ENCODE measurements at regions of chr2 and their contacts with region 1.

Region 1: DNA sequence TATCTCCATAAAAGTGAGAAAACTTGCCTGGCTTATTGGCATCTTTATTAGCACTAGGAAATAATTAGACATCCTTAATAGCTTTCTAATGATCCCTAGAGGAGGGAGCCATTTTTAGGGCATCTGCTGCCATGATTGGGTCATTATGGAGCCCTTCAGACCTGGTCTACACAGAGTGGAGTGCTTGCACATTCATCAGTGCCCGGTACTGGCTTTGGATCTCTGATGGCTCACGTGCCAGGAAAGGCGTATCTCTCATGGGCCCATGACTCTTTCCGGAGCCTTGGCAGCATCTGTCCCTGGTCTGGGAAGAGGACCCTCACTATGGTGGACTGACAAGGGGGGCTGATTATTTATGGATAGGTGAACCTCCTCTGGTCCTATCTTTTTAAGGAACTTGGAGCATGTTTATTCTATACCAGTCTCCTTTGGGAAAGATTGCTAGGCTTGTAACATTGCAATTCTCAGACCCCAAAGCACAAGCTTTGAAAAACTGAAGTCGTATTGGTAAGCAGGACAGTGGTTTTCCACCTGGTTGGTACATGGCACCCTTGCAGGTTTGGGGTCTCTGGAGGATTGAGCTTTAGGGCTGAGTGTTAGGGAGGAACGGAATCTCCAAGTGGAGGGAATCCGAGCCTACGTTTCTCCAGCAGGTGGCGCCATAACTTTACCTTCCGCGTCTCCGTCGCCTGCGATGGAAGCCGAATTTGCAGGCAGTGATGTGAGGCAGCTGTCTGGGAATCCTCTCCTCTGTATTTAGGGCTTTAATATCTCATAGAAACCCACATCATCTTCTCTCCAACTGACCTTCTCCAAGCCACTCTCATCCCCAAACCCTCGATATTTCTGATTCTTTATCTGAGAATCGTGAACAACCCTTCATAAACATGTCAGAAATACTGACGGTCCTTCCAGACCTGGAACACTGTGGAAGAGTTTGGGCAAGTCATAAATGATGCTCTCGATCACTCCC is 27.8 kb downstream of the SIX2 start:
- DNase-seq: peak; percentile 60
- ATAC-seq: peak; percentile 96
- H3K4me3 ChIP-seq: no peak overlapping the region
- H3K27ac ChIP-seq: no peak overlapping the region
- H3K4me1 ChIP-seq: no peaks in the 10 kb centered on the region
- H3K27me3 ChIP-seq: no peaks in the 10 kb centered on the region
- CTCF ChIP-seq: peak; percentile 82 to 83 (median 83)
- POLR2A ChIP-seq: no peak
- RAD21 ChIP-seq: peak; percentile 97

Region 2: GRCh38 chr2:45184606-45185005 is 203.2 kb after region 1 on chr2:
- CTCF ChIA-PET with region 1: no interaction called
- POLR2A ChIA-PET with region 1: no interaction called
- RAD21 ChIA-PET with region 1: no interaction called
- intact Hi-C with region 1: no loop called
- DNase-seq: peak; percentile 28
- ATAC-seq: peak; percentile 90
- H3K4me3 ChIP-seq: peak overlapping the region in 1 of 2 experiments; percentile 15; a peak in 1 of 4 replicates
- H3K27ac ChIP-seq: no peak overlapping the region
- H3K4me1 ChIP-seq: peaks cover 0 to 21% of the 10 kb centered on the region in 2 experiments; a peak in 2 of 4 replicates
- H3K27me3 ChIP-seq: peaks cover 5% of the 10 kb centered on the region; the same call in 1 of the 2 replicates
- CTCF ChIP-seq: no peak
- POLR2A ChIP-seq: no peak
- RAD21 ChIP-seq: no peak

Region 3: GRCh38 chr2:45494269-45494977 is 513.0 kb after region 1 on chr2:
- CTCF ChIA-PET with region 1: interaction called, 62 read pairs
- POLR2A ChIA-PET with region 1: no interaction called
- RAD21 ChIA-PET with region 1: interaction called, 5 to 7 read pairs
- intact Hi-C with region 1: loop called (anchors 1 kb)
- DNase-seq: peak; percentile 40
- ATAC-seq: peak; percentile 61; the same call in 1 of the 2 replicates
- H3K4me3 ChIP-seq: no peak overlapping the region
- H3K27ac ChIP-seq: no peak overlapping the region
- H3K4me1 ChIP-seq: no peaks in the 10 kb centered on the region
- H3K27me3 ChIP-seq: no peaks in the 10 kb centered on the region
- CTCF ChIP-seq: peak; percentile 70 to 80 (median 78)
- POLR2A ChIP-seq: no peak
- RAD21 ChIP-seq: peak; percentile 89

Region 4: DNA sequence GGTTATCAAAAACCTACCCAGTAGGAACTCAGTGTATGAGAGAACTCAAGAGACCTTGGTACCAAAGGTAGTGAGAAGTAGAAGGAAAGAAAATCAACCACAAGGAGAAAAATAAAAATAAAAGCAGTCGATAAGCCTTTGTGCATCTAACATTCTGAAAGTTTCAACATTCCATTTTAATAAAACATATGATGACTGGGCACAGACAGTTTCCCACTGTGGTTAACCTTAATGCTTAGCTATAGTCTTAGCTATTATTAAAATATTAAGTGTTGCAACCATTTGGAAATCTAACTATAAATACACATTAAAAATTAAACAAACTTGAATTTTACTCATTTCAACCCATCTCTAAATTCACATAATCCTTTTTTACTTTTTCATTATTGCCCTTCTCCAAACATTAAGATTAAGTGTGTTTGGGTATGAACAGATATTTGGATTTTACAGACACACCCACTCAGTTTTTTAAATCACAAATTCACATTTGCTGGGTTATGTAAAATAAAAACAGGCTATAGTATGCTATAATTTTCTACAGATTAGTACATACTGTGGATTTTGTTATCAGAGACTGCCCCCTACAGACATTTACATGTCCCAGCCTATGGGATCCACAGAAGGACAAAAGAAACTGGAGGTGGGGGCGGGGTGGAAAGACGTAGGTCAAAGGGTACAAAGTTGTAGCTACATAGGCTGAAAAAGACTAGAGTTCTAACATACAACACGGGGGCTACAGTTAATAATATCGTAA is 596.8 kb after region 1 on chr2:
- CTCF ChIA-PET with region 1: interaction called, 3 read pairs
- POLR2A ChIA-PET with region 1: no interaction called
- RAD21 ChIA-PET with region 1: no interaction called
- intact Hi-C with region 1: loop called (anchors 5 kb)
- DNase-seq: no peak
- ATAC-seq: peak; percentile 75
- H3K4me3 ChIP-seq: no peak overlapping the region
- H3K27ac ChIP-seq: no peak overlapping the region
- H3K4me1 ChIP-seq: no peaks in the 10 kb centered on the region
- H3K27me3 ChIP-seq: no peaks in the 10 kb centered on the region
- CTCF ChIP-seq: peak; percentile 27 to 49 (median 27); a peak in 5 of 6 replicates
- POLR2A ChIP-seq: no peak
- RAD21 ChIP-seq: peak; percentile 50

Region 5: GRCh38 chr2:46400016-46400415 is 1418.6 kb after region 1 on chr2:
- CTCF ChIA-PET with region 1: no interaction called
- POLR2A ChIA-PET with region 1: no interaction called
- RAD21 ChIA-PET with region 1: no interaction called
- intact Hi-C with region 1: no loop called
- DNase-seq: no peak
- ATAC-seq: no peak
- H3K4me3 ChIP-seq: no peak overlapping the region
- H3K27ac ChIP-seq: no peak overlapping the region
- H3K4me1 ChIP-seq: no peaks in the 10 kb centered on the region
- H3K27me3 ChIP-seq: no peaks in the 10 kb centered on the region
- CTCF ChIP-seq: no peak
- POLR2A ChIP-seq: no peak
- RAD21 ChIP-seq: no peak